ENCODE measurements at regions of chr9 and their contacts with region 1.

Region 1: GRCh38 chr9:96279960-96280359 is 22.0 kb downstream of the HSD17B3 start:
- DNase-seq: no peak
- H3K4me3 ChIP-seq: no peak overlapping the region
- CTCF ChIP-seq: no peak
- POLR2A ChIP-seq: no peak

Region 2: DNA sequence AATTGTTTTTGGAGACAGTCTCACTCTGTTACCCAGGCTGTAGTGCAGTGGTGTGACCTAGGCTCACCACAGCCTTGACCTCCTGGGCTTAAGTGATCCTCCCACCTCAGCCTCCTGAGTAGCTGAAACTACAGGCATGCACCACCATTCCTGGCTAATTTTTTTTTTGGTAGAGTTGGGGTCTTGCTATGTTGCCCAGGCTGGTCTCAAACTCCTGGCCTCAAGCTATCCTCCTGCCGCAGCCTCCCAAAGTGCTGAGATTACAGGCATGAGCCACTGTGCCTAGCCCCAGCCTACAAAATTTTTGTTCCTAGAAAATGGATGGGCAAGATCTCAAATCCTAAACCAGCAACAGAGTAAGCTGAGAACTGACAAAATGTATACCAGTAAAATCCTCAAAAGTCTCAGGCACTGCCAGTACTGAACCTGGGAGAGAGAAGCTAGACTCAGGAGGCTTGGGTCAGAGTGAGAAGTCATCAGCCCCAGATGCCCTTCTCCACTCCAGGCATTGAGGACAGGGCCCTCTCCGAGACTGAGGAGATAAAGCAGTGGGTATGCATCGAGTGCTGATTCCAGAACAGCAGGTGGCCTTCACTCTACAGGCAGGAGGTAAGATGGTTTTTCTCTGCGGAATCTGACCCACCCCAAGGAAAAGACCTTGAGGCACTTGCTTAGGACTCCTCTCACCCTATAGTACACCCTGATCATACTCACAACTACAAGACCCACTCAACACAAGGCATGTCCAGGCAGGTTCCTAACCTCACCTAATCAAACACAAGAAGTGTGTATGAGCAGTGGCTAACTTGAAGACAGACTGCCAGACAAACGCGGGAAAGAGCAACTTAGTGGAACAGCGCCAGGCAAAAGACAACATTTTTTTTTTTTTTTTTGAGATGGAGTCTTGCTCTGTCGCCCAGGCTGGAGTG is 13.4 kb before region 1 on chr9:
- intact Hi-C with region 1: loop called (anchors 1 kb)
- DNase-seq: no peak
- H3K4me3 ChIP-seq: no peak overlapping the region
- CTCF ChIP-seq: no peak
- POLR2A ChIP-seq: no peak